ENCODE measurements at regions of chr9 and their contacts with region 1.

Region 1: DNA sequence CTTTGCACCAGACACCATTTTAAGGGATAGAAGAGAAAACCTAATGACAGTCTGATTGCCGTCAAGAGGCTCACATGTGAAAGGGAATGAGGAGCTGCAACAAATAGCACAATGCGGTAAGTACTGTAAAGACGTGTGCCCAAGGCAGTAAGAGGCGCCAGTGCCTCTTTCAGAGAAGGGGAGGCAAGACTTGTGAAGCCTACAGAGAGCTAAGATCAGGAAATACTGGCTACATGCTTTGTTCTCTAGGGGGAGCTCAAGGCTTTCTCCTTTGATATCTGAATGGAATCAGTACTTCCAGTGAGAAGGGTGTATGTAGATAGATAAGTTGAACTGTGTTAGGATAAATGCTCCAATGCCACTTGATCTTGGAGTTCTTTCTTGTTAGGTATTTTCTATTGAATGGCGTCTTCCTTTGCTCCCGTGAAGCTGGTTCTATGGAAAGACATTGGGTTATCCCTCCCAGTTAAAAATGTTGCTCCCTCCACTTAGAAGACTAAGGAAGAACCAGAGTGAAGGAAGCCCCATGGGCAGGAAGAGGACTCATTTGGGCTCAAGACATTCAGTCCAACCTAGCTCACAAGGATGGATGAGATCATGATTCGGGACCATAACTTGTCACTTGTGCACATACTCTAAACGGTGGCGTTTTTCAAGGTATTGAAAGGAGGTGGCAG is 23.5 kb upstream of the ALDOB start:
- DNase-seq: peak; percentile 31
- H3K4me3 ChIP-seq: no peak overlapping the region
- H3K27me3 ChIP-seq: no peaks in the 10 kb centered on the region
- CTCF ChIP-seq: peak; percentile 89

Region 2: DNA sequence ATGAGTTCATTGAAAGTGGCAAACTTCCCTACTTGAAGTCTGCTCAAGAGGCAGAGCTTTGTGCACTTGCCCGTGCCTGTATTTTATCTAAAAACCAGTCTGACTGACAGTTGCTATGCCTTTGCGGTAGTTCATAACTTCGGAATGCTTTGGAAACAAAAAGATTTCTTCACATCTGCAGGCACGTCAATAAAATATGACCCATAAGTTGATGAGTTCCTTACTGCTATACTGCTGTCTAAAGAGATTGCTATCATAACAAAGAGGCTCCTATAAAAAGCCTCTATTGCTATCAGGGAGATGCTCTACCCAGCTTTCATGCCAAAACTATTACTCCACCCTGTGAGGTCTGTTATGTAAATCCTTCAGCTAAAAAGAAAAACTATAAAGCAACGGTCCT is 49.1 kb after region 1 on chr9:
- CTCF ChIA-PET with region 1: interaction called, 10 read pairs
- POLR2A ChIA-PET with region 1: no interaction called
- DNase-seq: peak; percentile 66
- H3K4me3 ChIP-seq: no peak overlapping the region
- H3K27me3 ChIP-seq: no peaks in the 10 kb centered on the region
- CTCF ChIP-seq: no peak

Region 3: DNA sequence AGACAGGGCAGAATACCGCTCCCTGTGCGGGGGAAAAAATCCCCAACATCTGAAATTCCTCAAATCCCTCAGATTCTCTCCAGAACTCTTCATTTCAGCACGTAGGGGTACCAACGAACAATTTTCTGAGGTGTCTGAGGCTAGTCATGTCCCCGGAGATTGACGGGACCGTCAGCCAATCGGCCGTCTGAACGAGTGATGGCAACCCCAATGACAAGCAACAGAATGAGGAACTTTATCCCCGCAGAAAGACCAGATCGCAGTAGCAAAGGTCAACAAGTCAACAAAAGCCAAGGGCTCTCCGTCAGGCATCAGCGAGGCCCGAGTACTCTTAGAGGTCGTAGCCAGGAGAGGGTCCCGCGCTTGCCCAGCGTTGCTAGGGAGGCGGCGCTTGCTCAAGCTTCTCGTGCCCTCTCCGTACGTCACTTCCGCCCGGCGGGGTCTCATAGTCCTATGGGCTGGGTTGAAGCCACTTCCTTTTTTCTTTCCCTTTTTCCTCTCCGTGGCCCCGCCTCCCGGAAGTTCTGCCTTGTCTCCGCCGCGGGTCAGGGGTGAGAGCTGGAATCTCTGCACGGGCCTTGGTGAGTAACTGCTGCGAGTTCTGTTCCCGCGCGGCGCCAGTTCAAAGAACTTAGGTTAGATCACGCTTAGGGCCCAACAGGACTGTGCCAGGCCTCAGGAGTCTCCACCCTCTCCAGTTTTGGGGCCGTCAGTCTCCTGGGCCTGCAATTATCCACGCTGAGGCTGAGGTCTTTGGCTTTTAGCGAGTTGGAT is 74.4 kb after region 1 on chr9 and contains the start of gene RNF20:
- CTCF ChIA-PET with region 1: interaction called, 490 read pairs
- POLR2A ChIA-PET with region 1: no interaction called
- DNase-seq: peak; percentile 91
- H3K4me3 ChIP-seq: peak within 1 kb of the TSS; percentile 61
- H3K27me3 ChIP-seq: no peaks in the 10 kb centered on the region
- CTCF ChIP-seq: no peak
- polyA plus RNA-seq, gene RNF20: 18.0 and 30.4 TPM in 2 replicates

Region 4: DNA sequence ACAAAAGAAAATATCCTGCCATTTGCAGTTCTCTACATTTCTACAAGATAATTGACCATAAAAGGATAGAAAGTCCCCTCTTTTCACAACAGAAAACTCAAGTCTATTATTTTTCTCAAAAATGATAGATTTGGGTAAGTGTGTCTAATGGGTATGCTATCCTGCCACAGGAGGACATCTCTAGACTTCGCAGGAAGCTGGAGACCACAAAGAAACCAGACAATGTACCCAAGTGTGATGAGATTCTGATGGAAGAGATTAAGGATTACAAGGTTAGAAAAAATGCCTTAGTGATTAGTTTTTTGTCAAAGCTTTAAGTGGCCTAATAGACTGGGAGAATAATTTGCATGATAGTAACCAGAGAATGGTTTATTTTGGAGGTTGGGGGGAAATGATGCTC is 102.6 kb after region 1 on chr9:
- CTCF ChIA-PET with region 1: interaction called, 10 read pairs
- POLR2A ChIA-PET with region 1: no interaction called
- DNase-seq: no peak
- H3K4me3 ChIP-seq: no peak overlapping the region
- H3K27me3 ChIP-seq: no peaks in the 10 kb centered on the region
- CTCF ChIP-seq: no peak

Measured in BJ (cell line).